Activated CD4-positive, alpha-beta memory T cell treated with anti-CD3 and anti-CD28 coated beads for 36 hours (primary cell): ENCODE measurements at regions of chr17 and their contacts with region 1.

Region 1: GRCh38 chr17:48054238-48055185 is 6.4 kb downstream of the NFE2L1 start:
- DNase-seq: no peak
- H3K4me3 Mint-ChIP-seq: peak overlapping the region; percentile 65
- H3K27ac Mint-ChIP-seq: peak overlapping the region; percentile 99
- H3K4me1 Mint-ChIP-seq: peaks cover 69% of the 10 kb centered on the region
- H3K27me3 Mint-ChIP-seq: no peaks in the 10 kb centered on the region

Region 2: GRCh38 chr17:48037036-48037837 is 17.3 kb before region 1 on chr17 and contains the start of gene COPZ2:
- CTCF ChIA-PET with region 1: interaction called, 27 read pairs
- POLR2A ChIA-PET with region 1: interaction called, 3 read pairs
- intact Hi-C with region 1: no loop called
- DNase-seq: peak; percentile 76
- H3K4me3 Mint-ChIP-seq: peak within 1 kb of the TSS; percentile 78
- H3K27ac Mint-ChIP-seq: no peak within 1 kb of the TSS
- H3K4me1 Mint-ChIP-seq: peaks cover 7% of the 10 kb centered on the region
- H3K27me3 Mint-ChIP-seq: peaks cover 36% of the 10 kb centered on the region
- total RNA-seq, gene COPZ2: 4.9 to 6.2 TPM